ENCODE measurements at regions of chr12 and their contacts with region 1.

Region 1: GRCh38 chr12:12916135-12916944 is 25.0 kb downstream of the GPRC5A start:
- DNase-seq: peak; percentile 72 to 92 (median 82)
- ATAC-seq: peak; percentile 99
- H3K4me3 ChIP-seq: no peak overlapping the region
- H3K4me3 Mint-ChIP-seq: peak overlapping the region; percentile 4
- H3K27ac ChIP-seq: no peak overlapping the region
- H3K27ac Mint-ChIP-seq: no peak overlapping the region
- H3K4me1 ChIP-seq: peaks cover 4% of the 10 kb centered on the region
- H3K4me1 Mint-ChIP-seq: peaks cover 9% of the 10 kb centered on the region
- H3K27me3 ChIP-seq: peaks cover 0 to 7% of the 10 kb centered on the region in 2 experiments
- H3K27me3 Mint-ChIP-seq: peaks cover 19% of the 10 kb centered on the region
- CTCF ChIP-seq: peak; percentile 82

Region 2: GRCh38 chr12:12776261-12776660 is 140.1 kb before region 1 on chr12:
- CTCF ChIA-PET with region 1: no interaction called
- POLR2A ChIA-PET with region 1: no interaction called
- intact Hi-C with region 1: no loop called
- DNase-seq: no peak
- ATAC-seq: no peak
- H3K4me3 ChIP-seq: no peak overlapping the region
- H3K4me3 Mint-ChIP-seq: no peak overlapping the region
- H3K27ac ChIP-seq: no peak overlapping the region
- H3K27ac Mint-ChIP-seq: no peak overlapping the region
- H3K4me1 ChIP-seq: no peaks in the 10 kb centered on the region
- H3K4me1 Mint-ChIP-seq: no peaks in the 10 kb centered on the region
- H3K27me3 ChIP-seq: no peaks in the 10 kb centered on the region
- H3K27me3 Mint-ChIP-seq: no peaks in the 10 kb centered on the region
- CTCF ChIP-seq: no peak

Region 3: GRCh38 chr12:12983420-12984035 is 67.2 kb after region 1 on chr12:
- CTCF ChIA-PET with region 1: interaction called, 15 read pairs
- POLR2A ChIA-PET with region 1: no interaction called
- intact Hi-C with region 1: loop called in 1 of 2 experiments (anchors 5 kb)
- DNase-seq: peak in 1 of 9 experiments; percentile 25
- ATAC-seq: no peak
- H3K4me3 ChIP-seq: no peak overlapping the region
- H3K4me3 Mint-ChIP-seq: no peak overlapping the region
- H3K27ac ChIP-seq: no peak overlapping the region
- H3K27ac Mint-ChIP-seq: no peak overlapping the region
- H3K4me1 ChIP-seq: no peaks in the 10 kb centered on the region
- H3K4me1 Mint-ChIP-seq: no peaks in the 10 kb centered on the region
- H3K27me3 ChIP-seq: no peaks in the 10 kb centered on the region
- H3K27me3 Mint-ChIP-seq: no peaks in the 10 kb centered on the region
- CTCF ChIP-seq: no peak

Region 4: DNA sequence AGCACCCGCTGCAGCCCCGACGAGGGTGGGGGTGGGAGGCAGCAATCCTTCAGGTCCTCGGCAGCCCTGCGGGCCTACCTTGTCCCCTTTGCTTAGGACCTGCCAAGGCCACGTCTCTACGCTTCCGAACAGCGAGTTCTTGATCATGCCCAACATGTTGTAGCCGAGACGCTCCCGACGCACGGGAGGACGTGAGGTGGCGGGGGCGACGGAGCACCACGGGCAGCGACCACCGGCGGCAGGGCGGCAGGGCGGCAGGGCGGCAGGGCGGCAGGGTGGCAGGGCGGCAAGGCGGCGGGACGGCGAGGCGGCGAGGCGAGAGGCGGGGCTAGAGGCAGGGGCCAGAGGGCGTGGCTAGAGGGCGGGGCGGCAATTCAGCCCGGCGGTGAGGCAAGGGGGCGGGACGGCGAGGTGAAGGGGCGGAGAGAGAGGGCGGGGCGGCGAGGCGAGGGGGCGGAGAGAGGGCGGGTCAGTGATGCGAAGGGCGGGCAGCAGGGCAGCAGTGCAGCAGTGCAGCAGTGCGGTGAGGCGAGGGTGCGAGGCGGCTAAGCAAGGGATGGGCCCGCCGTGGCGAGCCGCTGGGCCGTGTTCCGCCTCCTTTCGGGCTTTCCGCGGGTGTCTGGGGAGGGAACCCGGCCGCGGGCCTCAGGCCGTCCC is 83.7 kb after region 1 on chr12 and contains the start of gene HEBP1:
- CTCF ChIA-PET with region 1: no interaction called
- POLR2A ChIA-PET with region 1: no interaction called
- intact Hi-C with region 1: loop called in 1 of 2 experiments (anchors 5 kb)
- DNase-seq: peak; percentile 90 to 98 (median 96)
- ATAC-seq: peak; percentile 95
- H3K4me3 ChIP-seq: peak within 1 kb of the TSS; percentile 84 to 85
- H3K4me3 Mint-ChIP-seq: peak within 1 kb of the TSS; percentile 96
- H3K27ac ChIP-seq: peak within 1 kb of the TSS; percentile 41 to 55
- H3K27ac Mint-ChIP-seq: peak within 1 kb of the TSS; percentile 82
- H3K4me1 ChIP-seq: peaks cover 20% of the 10 kb centered on the region
- H3K4me1 Mint-ChIP-seq: peaks cover 29% of the 10 kb centered on the region
- H3K27me3 ChIP-seq: peaks cover 0 to 4% of the 10 kb centered on the region in 2 experiments
- H3K27me3 Mint-ChIP-seq: peaks cover 6% of the 10 kb centered on the region
- CTCF ChIP-seq: no peak
- total RNA-seq, gene HEBP1: 4.6 to 5.6 TPM

Region 5: DNA sequence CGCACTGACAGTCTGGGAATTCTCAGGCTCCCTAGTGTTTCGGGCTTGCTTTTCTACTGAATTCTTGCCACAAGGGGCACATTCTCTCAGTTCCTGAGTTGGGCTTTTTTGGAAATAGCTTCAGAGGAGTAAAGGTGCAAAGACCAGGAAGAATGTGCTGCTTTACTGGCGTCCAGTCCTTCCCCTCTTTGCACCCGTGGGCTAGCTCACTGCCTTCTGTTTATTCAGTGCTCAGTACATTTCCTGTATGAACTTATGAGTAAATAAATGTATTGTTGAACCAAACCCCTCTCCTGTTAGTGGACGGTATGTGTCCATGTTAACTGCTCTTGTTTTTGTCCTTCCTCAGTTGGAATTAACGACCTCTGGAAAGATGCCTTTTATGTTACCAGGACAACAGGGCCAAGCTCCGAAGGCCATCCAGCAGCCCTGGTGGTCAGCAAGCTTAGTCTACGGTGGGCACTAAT is 163.1 kb after region 1 on chr12:
- CTCF ChIA-PET with region 1: no interaction called
- POLR2A ChIA-PET with region 1: no interaction called
- intact Hi-C with region 1: no loop called
- DNase-seq: no peak
- ATAC-seq: no peak
- H3K4me3 ChIP-seq: no peak overlapping the region
- H3K4me3 Mint-ChIP-seq: no peak overlapping the region
- H3K27ac ChIP-seq: no peak overlapping the region
- H3K27ac Mint-ChIP-seq: no peak overlapping the region
- H3K4me1 ChIP-seq: no peaks in the 10 kb centered on the region
- H3K4me1 Mint-ChIP-seq: no peaks in the 10 kb centered on the region
- H3K27me3 ChIP-seq: no peaks in the 10 kb centered on the region
- H3K27me3 Mint-ChIP-seq: no peaks in the 10 kb centered on the region
- CTCF ChIP-seq: no peak

Region 6: DNA sequence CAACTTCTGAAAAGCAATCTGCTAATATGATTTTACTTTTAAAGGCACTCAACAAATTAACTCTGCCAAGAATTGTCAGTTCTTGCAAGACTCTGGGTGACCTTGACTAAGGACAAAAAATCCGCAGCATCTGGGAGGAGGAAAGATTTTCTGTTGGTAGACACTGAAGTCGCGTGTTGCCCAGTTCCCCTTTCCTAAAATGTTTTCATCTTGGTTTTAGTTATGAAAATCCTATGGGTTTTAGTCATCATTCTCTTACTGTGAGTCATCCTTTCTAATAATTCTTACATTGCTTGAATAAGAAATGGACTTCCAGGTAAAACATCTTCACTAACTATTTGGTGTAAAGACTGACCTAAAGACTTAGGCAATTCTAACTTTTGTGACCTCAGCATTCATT is 178.0 kb after region 1 on chr12:
- CTCF ChIA-PET with region 1: interaction called, 9 read pairs
- POLR2A ChIA-PET with region 1: no interaction called
- intact Hi-C with region 1: loop called (anchors 1 kb)
- DNase-seq: peak in 1 of 9 experiments; percentile 21
- ATAC-seq: no peak
- H3K4me3 ChIP-seq: no peak overlapping the region
- H3K4me3 Mint-ChIP-seq: no peak overlapping the region
- H3K27ac ChIP-seq: no peak overlapping the region
- H3K27ac Mint-ChIP-seq: no peak overlapping the region
- H3K4me1 ChIP-seq: peaks cover 14% of the 10 kb centered on the region
- H3K4me1 Mint-ChIP-seq: peaks cover 15% of the 10 kb centered on the region
- H3K27me3 ChIP-seq: no peaks in the 10 kb centered on the region
- H3K27me3 Mint-ChIP-seq: peaks cover 4% of the 10 kb centered on the region
- CTCF ChIP-seq: no peak

Region 7: DNA sequence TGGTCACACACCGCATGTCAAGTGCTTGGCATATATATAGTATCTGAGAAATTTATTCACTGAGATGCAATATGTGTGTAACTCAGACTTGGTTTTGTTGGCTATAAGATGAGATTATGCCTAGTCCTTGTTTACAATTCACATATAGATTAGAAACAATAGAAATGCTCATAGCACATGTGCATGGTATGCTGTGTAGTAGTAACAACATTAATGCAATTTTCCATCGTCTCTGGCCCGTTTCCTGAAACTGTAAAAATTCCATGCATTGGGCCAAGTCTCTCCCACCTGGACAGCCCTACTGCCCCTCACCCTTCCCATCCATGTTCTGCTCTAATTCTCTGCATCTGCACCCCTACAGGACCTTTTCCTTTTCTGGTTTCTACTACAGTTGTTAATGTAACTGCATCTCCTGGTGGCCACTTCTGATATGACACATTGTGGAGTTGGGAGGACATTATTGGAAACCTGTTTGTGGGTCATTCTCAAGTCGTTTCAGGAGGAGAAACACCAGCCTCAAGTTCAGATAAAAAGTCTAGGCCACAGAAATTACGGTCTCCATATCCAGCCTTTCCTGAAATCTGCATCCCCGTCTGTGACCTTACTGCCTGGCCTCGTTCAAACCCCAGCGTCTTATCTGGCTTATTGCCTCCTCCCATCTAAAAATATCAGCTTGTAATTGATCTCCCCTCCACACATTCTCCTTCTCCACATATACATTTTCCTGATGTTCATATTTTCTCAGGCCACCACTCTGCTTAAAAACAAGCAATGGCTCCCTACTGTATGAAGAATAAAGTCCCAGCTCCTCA is 317.7 kb after region 1 on chr12:
- CTCF ChIA-PET with region 1: interaction called, 7 read pairs
- POLR2A ChIA-PET with region 1: no interaction called
- intact Hi-C with region 1: loop called (anchors 1 kb)
- DNase-seq: peak in 6 of 9 experiments; percentile 5 to 55 (median 32)
- ATAC-seq: peak; percentile 59
- H3K4me3 ChIP-seq: no peak overlapping the region
- H3K4me3 Mint-ChIP-seq: no peak overlapping the region
- H3K27ac ChIP-seq: no peak overlapping the region
- H3K27ac Mint-ChIP-seq: no peak overlapping the region
- H3K4me1 ChIP-seq: no peaks in the 10 kb centered on the region
- H3K4me1 Mint-ChIP-seq: no peaks in the 10 kb centered on the region
- H3K27me3 ChIP-seq: peaks cover 0 to 2% of the 10 kb centered on the region in 2 experiments
- H3K27me3 Mint-ChIP-seq: peaks cover 18% of the 10 kb centered on the region
- CTCF ChIP-seq: peak; percentile 75

Region 8: GRCh38 chr12:13255792-13256691 is 339.7 kb after region 1 on chr12:
- CTCF ChIA-PET with region 1: interaction called, 11 read pairs
- POLR2A ChIA-PET with region 1: no interaction called
- intact Hi-C with region 1: no loop called
- DNase-seq: peak; percentile 48 to 79 (median 73)
- ATAC-seq: peak; percentile 97
- H3K4me3 ChIP-seq: no peak overlapping the region
- H3K4me3 Mint-ChIP-seq: no peak overlapping the region
- H3K27ac ChIP-seq: no peak overlapping the region
- H3K27ac Mint-ChIP-seq: no peak overlapping the region
- H3K4me1 ChIP-seq: no peaks in the 10 kb centered on the region
- H3K4me1 Mint-ChIP-seq: peaks cover 3% of the 10 kb centered on the region
- H3K27me3 ChIP-seq: no peaks in the 10 kb centered on the region
- H3K27me3 Mint-ChIP-seq: peaks cover 6% of the 10 kb centered on the region
- CTCF ChIP-seq: peak; percentile 96

Region 9: GRCh38 chr12:14167005-14167628 is 1250.8 kb after region 1 on chr12:
- CTCF ChIA-PET with region 1: interaction called, 10 read pairs
- POLR2A ChIA-PET with region 1: no interaction called
- intact Hi-C with region 1: loop called in 1 of 2 experiments (anchors 2 kb)
- DNase-seq: peak in 7 of 9 experiments; percentile 4 to 55 (median 42)
- ATAC-seq: peak; percentile 48
- H3K4me3 ChIP-seq: no peak overlapping the region
- H3K4me3 Mint-ChIP-seq: no peak overlapping the region
- H3K27ac ChIP-seq: no peak overlapping the region
- H3K27ac Mint-ChIP-seq: no peak overlapping the region
- H3K4me1 ChIP-seq: no peaks in the 10 kb centered on the region
- H3K4me1 Mint-ChIP-seq: peaks cover 3% of the 10 kb centered on the region
- H3K27me3 ChIP-seq: no peaks in the 10 kb centered on the region
- H3K27me3 Mint-ChIP-seq: peaks cover 5% of the 10 kb centered on the region
- CTCF ChIP-seq: peak; percentile 91

Measured in CD8-positive, alpha-beta T cell (primary cell).